OCI-LY7 (cell line): ENCODE measurements at regions of chr2 and their contacts with region 1.

Region 1: DNA sequence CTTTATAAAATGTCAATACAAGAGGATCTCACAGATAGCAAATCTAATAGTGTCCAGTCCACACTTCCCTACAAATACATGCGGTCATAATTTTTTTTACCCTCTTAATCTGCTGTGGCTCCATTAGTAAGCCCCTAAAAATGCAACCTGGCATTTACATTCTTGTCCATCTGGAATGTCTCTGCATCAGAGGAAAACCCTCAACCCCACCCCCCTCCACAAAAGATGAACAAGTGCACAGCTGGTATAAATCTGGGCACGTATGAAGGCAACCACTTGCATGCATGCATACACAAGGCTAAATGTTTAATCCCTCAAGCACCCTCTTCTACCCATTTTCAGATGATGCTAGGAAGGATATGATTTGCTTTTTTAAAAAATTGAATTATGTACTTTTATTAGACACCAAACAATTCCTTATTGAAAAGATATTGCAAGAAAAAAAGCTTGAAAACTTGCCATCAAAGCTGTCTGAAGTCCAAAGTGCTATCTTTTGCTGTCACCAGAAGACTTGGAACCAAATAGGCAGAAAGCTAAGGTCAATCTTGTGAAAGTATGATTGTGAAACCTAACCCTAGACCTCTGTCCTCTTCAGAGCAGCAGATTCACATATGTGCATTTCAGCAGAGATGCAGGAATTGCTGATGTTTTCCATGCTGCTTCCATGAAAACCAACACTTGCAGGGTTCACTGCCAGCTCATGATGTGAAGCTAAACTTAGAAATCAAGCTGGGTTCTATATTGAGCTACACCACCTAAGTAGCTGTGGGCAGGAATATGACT is 39.0 kb downstream of the IRS1 start:
- DNase-seq: no peak
- H3K4me3 ChIP-seq: no peak overlapping the region
- H3K27ac ChIP-seq: no peak overlapping the region
- H3K4me1 ChIP-seq: peaks cover 10% of the 10 kb centered on the region
- CTCF ChIP-seq: no peak

Region 2: GRCh38 chr2:226772389-226773179 is 12.0 kb after region 1 on chr2:
- CTCF ChIA-PET with region 1: no interaction called
- POLR2A ChIA-PET with region 1: interaction called, 36 read pairs
- intact Hi-C with region 1: no loop called
- DNase-seq: peak; percentile 95
- H3K4me3 ChIP-seq: peak overlapping the region; percentile 56
- H3K27ac ChIP-seq: peak overlapping the region; percentile 90
- H3K4me1 ChIP-seq: peaks cover 61% of the 10 kb centered on the region
- CTCF ChIP-seq: no peak

Region 3: DNA sequence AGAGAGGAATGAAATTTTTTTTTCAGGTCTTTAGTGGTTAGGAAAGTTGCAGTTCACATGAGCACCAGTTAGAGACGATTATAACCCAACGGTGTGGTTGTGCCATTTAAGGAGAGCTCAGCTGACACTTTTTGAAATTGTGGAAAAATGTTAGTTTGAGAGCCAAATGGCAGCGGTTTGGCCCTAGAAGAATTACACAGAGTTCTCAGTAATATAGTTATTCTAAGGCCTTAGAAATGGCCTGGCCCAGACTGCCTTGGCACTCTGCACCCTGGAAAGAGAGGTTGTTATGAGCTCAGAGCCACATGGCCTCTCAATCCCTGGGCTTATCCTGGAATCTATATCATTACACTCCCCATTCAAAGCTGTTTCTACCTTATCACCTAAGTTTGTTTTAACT is 192.6 kb after region 1 on chr2:
- CTCF ChIA-PET with region 1: no interaction called
- POLR2A ChIA-PET with region 1: no interaction called
- intact Hi-C with region 1: no loop called
- DNase-seq: no peak
- H3K4me3 ChIP-seq: no peak overlapping the region
- H3K27ac ChIP-seq: no peak overlapping the region
- H3K4me1 ChIP-seq: peaks cover 6% of the 10 kb centered on the region
- CTCF ChIP-seq: no peak

Region 4: GRCh38 chr2:227025510-227025909 is 264.9 kb after region 1 on chr2:
- CTCF ChIA-PET with region 1: no interaction called
- POLR2A ChIA-PET with region 1: no interaction called
- intact Hi-C with region 1: no loop called
- DNase-seq: no peak
- H3K4me3 ChIP-seq: no peak overlapping the region
- H3K27ac ChIP-seq: no peak overlapping the region
- H3K4me1 ChIP-seq: no peaks in the 10 kb centered on the region
- CTCF ChIP-seq: no peak